ENCODE measurements at regions of chr3 and their contacts with region 1.

Region 1: GRCh38 chr3:136042608-136043221 is 77.2 kb downstream of the PPP2R3A start:
- DNase-seq: peak; percentile 9
- H3K4me3 ChIP-seq: no peak overlapping the region
- H3K27me3 ChIP-seq: no peaks in the 10 kb centered on the region
- CTCF ChIP-seq: peak; percentile 55

Region 2: DNA sequence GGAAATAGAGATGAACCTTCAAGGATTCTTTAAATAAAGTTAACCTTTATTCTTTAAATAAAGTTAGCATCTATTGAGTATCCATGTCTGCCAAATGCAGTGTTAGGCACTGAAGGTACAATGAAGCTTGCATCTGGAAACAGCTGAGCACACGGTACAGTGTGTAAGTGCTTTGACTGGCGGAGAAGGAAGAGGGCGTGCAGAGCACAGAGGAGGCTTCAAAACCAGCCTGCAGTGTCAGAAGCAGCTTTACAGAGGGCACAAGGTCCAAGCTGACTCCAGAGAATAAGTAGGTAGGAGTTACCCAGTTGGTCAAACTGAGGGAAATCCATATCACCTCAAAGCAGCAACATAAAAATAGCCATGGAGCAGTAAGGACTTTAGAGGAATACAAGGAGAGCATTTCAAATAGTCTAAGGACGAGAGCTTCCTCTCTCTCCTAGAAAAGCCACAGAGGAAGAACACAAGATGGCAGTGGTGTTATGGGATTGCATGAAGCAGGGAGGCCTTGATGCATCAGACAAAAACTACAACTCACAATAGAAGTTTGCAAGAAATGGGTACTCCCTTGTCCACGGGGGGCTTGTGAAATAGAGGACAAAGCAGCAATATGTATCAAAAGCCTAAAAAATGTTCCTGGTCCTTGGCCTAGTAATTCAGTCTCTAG is 137.5 kb before region 1 on chr3:
- CTCF ChIA-PET with region 1: interaction called, 94 read pairs
- POLR2A ChIA-PET with region 1: no interaction called
- DNase-seq: no peak
- H3K4me3 ChIP-seq: no peak overlapping the region
- H3K27me3 ChIP-seq: no peaks in the 10 kb centered on the region
- CTCF ChIP-seq: peak; percentile 35; the same call in 1 of the 2 replicates

Region 3: DNA sequence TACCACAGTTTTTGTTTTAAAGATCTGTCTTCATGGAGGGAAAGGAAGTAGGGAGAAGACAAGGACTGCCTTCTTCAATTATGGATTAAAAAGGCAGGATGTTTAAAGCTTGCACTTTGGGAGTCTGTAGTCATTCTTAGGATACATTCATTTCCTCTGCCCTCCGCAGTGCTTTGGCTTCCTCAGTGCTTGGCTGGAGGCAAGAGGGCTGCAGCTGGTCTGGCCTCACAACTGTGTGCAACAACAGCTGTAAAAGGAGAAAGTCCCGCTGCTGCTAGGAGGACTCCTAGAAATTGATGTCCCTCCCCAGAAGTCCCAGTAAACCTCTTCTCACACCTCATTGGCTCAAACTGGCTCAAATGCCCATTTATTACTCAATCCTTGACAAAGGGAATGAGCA is 131.6 kb before region 1 on chr3:
- CTCF ChIA-PET with region 1: interaction called, 269 read pairs
- POLR2A ChIA-PET with region 1: no interaction called
- DNase-seq: no peak
- H3K4me3 ChIP-seq: no peak overlapping the region
- H3K27me3 ChIP-seq: no peaks in the 10 kb centered on the region
- CTCF ChIP-seq: no peak

Region 4: GRCh38 chr3:135918580-135918962 is 124.1 kb before region 1 on chr3:
- CTCF ChIA-PET with region 1: interaction called, 269 read pairs
- POLR2A ChIA-PET with region 1: no interaction called
- DNase-seq: no peak
- H3K4me3 ChIP-seq: no peak overlapping the region
- H3K27me3 ChIP-seq: no peaks in the 10 kb centered on the region
- CTCF ChIP-seq: peak; percentile 56

Region 5: DNA sequence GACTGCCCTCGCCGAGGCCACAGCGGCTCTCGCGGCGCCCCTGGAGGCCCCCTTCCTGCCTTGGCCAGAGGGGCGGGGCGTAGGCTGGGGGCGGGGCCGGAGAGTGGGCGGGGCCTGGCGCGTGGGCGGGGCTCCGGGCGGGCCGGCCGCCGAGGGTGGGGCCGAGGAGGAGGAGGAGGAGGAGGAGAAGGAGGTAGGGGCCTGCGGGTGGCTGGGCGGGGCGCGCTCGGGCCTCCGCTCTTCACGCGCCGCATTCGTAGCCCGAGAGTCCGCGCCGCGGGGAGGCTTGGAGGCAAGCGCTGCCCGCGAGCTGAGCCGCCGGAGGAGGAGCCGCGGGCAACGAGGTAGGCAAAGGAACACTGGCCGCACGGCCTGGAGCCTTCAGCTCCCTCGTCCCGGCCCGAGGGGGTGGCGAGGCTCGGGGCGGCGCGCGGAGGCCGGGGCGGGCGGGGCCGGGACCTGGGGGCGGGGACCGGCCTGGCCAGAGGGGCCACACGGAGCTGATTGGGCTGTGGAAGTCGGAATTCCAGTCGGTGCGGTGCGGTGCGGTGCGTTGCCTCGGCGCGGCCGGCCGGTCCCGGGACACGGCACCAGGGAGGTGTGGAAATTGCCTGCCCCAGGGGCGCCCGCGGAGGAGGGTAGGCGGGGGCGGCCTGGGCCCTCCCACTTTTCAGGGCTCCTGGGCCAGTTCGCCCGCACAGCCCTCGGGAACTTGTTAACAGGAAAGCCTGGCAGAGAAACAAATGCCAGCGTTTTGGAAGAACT is 77.0 kb before region 1 on chr3 and contains the start of gene PPP2R3A:
- CTCF ChIA-PET with region 1: interaction called, 15 read pairs
- POLR2A ChIA-PET with region 1: no interaction called
- DNase-seq: peak; percentile 27
- H3K4me3 ChIP-seq: peak within 1 kb of the TSS; percentile 60
- H3K27me3 ChIP-seq: no peaks in the 10 kb centered on the region
- CTCF ChIP-seq: no peak
- polyA plus RNA-seq, gene PPP2R3A: 7.4 and 13.5 TPM in 2 replicates

Region 6: GRCh38 chr3:136022529-136023263 is 20.0 kb before region 1 on chr3:
- CTCF ChIA-PET with region 1: interaction called, 11 read pairs
- POLR2A ChIA-PET with region 1: no interaction called
- DNase-seq: no peak
- H3K4me3 ChIP-seq: no peak overlapping the region
- H3K27me3 ChIP-seq: no peaks in the 10 kb centered on the region
- CTCF ChIP-seq: no peak

Region 7: DNA sequence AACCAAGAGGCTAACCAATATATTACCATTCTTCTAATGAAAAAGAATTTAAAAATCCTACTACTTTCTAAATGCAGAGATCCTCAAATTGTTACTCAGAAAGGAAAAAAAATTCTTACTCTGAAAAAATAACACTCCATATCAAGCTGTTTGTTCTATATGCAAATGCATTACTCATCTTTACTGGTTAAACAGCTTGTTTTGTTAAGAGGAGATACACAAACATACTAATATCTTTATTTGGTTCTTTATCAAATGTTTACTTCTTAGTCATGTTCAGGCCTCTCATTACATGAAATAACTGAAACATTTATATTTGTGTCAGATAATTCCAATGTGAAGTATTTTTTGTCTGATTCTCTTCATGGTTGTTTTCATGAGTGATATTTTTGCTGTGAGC is 354.2 kb after region 1 on chr3:
- CTCF ChIA-PET with region 1: no interaction called
- POLR2A ChIA-PET with region 1: no interaction called
- DNase-seq: peak; percentile 6
- H3K4me3 ChIP-seq: no peak overlapping the region
- H3K27me3 ChIP-seq: no peaks in the 10 kb centered on the region
- CTCF ChIP-seq: no peak